ENCODE measurements at regions of chr10 and their contacts with region 1.

Region 1: DNA sequence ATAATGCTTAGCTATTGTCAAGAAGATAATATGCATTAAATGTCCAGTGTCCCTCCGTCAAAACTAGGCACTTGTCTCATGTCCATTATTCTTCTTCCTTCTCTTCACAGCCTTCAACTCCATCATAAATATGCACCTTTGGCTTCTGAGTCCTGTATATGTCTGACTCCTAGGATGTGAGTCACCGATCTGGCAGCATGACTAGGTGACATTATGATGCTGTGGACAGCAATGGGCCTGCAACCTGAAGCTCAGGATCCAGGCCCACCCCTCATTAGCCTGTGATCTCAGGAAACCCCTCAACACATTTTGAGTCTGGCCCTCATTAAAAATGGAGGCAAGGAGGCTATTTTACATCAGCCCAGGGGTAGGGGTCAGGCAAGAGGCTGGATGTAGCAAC is 362.5 kb upstream of the ZMIZ1 start:
- DNase-seq: peak; percentile 100
- ATAC-seq: peak; percentile 99
- H3K4me3 ChIP-seq: no peak overlapping the region
- H3K27ac ChIP-seq: no peak overlapping the region
- H3K4me1 ChIP-seq: peaks cover 13% of the 10 kb centered on the region
- H3K27me3 ChIP-seq: no peaks in the 10 kb centered on the region
- CTCF ChIP-seq: no peak

Region 2: DNA sequence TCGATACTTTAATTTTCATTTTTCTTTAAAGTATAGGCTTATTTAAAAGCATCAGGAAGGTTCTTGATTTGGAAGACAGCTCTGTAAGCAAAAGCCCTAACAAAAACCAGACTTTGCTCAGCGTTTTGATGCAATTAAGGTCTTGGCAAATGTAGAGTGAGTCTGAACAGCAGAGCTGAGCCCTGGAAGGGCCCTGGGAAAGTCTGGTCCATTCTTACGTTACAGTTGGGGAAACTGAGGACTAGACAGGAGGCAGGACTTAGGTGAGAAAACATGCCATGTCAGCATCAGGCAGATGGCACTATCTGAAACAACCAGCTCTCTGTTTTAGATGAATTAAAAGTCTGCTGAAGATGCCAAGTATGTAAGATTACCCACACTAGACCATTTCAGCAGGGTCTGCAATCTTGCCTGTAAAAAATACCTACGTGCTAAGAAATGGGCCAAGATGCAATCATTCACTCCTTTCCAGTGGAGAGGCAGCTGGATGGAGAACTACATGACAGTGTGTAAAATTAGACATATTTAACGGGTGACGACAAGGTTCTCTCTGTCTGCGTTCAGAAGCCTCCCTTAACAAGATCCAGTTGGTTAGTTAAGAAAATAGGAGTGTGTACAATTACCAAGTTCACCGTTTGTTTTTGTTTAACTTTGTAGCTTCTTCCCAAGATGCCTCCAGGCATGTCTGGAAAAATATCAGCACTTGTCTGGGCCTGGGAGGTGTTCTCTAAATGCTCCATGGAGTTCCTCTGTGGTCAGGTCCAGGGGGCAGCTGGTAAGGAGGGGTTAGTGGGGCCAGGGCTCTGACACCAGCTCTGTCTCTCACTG is 139.8 kb before region 1 on chr10:
- CTCF ChIA-PET with region 1: no interaction called
- POLR2A ChIA-PET with region 1: no interaction called
- intact Hi-C with region 1: no loop called
- DNase-seq: no peak
- ATAC-seq: no peak
- H3K4me3 ChIP-seq: no peak overlapping the region
- H3K27ac ChIP-seq: no peak overlapping the region
- H3K4me1 ChIP-seq: 0 out of 2 replicates have a peak, but pooled peaks cover 4% of the 10 kb centered on the region
- H3K27me3 ChIP-seq: peaks cover 66% of the 10 kb centered on the region
- CTCF ChIP-seq: no peak

Region 3: GRCh38 chr10:78588194-78588811 is 118.0 kb before region 1 on chr10:
- CTCF ChIA-PET with region 1: no interaction called
- POLR2A ChIA-PET with region 1: no interaction called
- intact Hi-C with region 1: no loop called
- DNase-seq: no peak
- ATAC-seq: no peak
- H3K4me3 ChIP-seq: no peak overlapping the region
- H3K27ac ChIP-seq: no peak overlapping the region
- H3K4me1 ChIP-seq: no peaks in the 10 kb centered on the region
- H3K27me3 ChIP-seq: peaks cover 48% of the 10 kb centered on the region
- CTCF ChIP-seq: no peak

Region 4: GRCh38 chr10:78830062-78830975 is 124.1 kb after region 1 on chr10:
- CTCF ChIA-PET with region 1: no interaction called
- POLR2A ChIA-PET with region 1: no interaction called
- intact Hi-C with region 1: no loop called
- DNase-seq: peak; percentile 99
- ATAC-seq: peak; percentile 83
- H3K4me3 ChIP-seq: no peak overlapping the region
- H3K27ac ChIP-seq: peak overlapping the region; percentile 6
- H3K4me1 ChIP-seq: peaks cover 21% of the 10 kb centered on the region
- H3K27me3 ChIP-seq: peaks cover 5% of the 10 kb centered on the region; the same call in 1 of the 2 replicates
- CTCF ChIP-seq: no peak

Region 5: DNA sequence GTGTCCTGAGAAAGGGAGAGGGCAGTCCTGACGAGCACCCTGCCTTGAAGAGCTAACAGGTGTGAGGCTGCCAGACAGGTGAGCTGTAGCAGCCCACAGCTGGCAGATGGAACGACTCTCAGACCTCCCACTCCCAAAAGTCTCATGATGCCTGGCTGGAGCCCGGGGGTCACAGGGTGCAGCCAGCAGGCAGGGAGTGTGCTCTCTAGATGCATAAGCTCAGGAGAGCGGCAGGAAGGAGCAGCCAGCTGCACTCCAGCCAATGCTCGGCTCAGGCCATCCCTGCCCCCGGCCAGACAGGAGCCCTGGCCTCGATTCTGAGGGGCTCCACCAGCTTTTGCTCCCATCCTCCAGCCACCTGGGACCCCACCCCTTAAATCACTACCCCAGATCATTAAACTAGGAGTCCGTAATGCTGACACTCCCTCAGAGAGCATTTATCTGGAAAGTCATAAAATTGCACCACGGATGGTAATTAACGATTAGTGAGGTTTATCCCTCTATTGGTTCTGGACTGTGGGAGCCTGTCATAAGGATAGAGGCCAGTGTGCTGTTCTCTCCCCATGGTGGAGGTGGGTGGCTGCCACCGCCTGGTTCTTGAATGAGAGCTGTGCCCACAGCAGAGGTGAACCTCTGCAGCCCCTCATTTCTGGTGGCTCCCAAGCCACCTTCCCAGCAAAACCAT is 299.0 kb after region 1 on chr10:
- CTCF ChIA-PET with region 1: interaction called, 16 read pairs
- POLR2A ChIA-PET with region 1: no interaction called
- intact Hi-C with region 1: no loop called
- DNase-seq: no peak
- ATAC-seq: peak; percentile 16; the same call in 1 of the 2 replicates
- H3K4me3 ChIP-seq: no peak overlapping the region
- H3K27ac ChIP-seq: no peak overlapping the region
- H3K4me1 ChIP-seq: no peaks in the 10 kb centered on the region
- H3K27me3 ChIP-seq: peaks cover 22% of the 10 kb centered on the region
- CTCF ChIP-seq: no peak

Measured in PC-3 (cell line).